ENCODE measurements at regions of chr20 and their contacts with region 1.

Region 1: GRCh38 chr20:1466211-1467081 is at the start of gene NSFL1C:
- DNase-seq: peak; percentile 94 to 99 (median 98)
- ATAC-seq: peak; percentile 96
- H3K4me3 ChIP-seq: peak within 1 kb of the TSS; percentile 73
- H3K4me3 Mint-ChIP-seq: peak within 1 kb of the TSS; percentile 88
- H3K27ac ChIP-seq: peak within 1 kb of the TSS; percentile 41 to 84
- H3K27ac Mint-ChIP-seq: peak within 1 kb of the TSS; percentile 68
- H3K4me1 ChIP-seq: peaks cover 34% of the 10 kb centered on the region
- H3K4me1 Mint-ChIP-seq: peaks cover 49% of the 10 kb centered on the region
- H3K27me3 ChIP-seq: peaks cover 0 to 2% of the 10 kb centered on the region in 2 experiments
- H3K27me3 Mint-ChIP-seq: peaks cover 10% of the 10 kb centered on the region
- CTCF ChIP-seq: peak; percentile 100
- total RNA-seq, gene NSFL1C: 53.2 to 53.4 TPM

Region 2: DNA sequence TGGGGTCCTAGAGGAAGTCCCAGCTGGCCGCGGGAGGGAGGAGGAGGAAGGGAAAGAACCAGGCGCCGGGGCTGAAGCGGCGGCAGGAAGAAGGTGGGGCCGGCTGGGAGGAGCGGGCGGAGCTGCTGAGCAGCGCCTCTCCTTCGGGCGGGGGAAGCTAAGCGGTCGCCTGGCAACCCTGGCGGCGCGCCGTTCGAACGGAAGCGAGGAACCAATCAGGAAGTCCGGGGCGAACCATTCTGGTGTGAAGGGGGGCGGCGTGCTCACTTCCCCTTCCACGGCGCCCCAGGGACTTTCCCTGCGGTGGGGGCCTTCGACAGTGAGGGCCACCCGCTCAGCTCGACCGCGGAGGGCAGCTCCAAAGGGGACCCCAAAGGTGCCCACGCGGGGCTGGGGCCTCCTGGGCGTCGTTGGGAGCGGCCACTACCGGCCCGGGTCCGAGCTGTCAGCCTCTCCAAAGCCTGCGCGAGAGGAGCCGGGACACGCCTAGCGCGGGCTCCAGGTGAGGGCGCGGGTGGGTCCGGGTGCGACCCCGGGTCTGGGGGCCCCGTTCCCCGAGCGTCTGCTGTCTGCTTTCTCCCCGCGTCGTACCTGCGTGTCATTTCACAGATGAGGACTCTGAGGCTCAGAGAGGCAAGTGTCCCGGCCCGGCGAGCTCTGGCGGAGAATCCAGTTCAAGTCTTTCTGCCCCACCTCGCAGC is 632.8 kb before region 1 on chr20 and contains the start of gene FAM110A:
- CTCF ChIA-PET with region 1: no interaction called
- POLR2A ChIA-PET with region 1: no interaction called
- intact Hi-C with region 1: loop called in 1 of 2 experiments (anchors 10 kb)
- DNase-seq: peak; percentile 91 to 98 (median 94)
- ATAC-seq: peak; percentile 93
- H3K4me3 ChIP-seq: peak within 1 kb of the TSS; percentile 74
- H3K4me3 Mint-ChIP-seq: peak within 1 kb of the TSS; percentile 92
- H3K27ac ChIP-seq: peak within 1 kb of the TSS; percentile 83 to 93
- H3K27ac Mint-ChIP-seq: peak within 1 kb of the TSS; percentile 87
- H3K4me1 ChIP-seq: peaks cover 40% of the 10 kb centered on the region
- H3K4me1 Mint-ChIP-seq: peaks cover 50% of the 10 kb centered on the region
- H3K27me3 ChIP-seq: no peaks in the 10 kb centered on the region
- H3K27me3 Mint-ChIP-seq: no peaks in the 10 kb centered on the region
- CTCF ChIP-seq: no peak
- total RNA-seq, gene FAM110A: 4.5 to 4.8 TPM

Region 3: GRCh38 chr20:1325173-1326030 is 141.0 kb before region 1 on chr20:
- CTCF ChIA-PET with region 1: interaction called, 5 read pairs
- POLR2A ChIA-PET with region 1: interaction called, 8 read pairs
- intact Hi-C with region 1: loop called (anchors 1 to 2 kb)
- DNase-seq: peak; percentile 98 to 100 (median 99)
- ATAC-seq: peak; percentile 84
- H3K4me3 ChIP-seq: peak overlapping the region; percentile 95
- H3K4me3 Mint-ChIP-seq: no peak overlapping the region
- H3K27ac ChIP-seq: peak overlapping the region; percentile 95 to 98
- H3K27ac Mint-ChIP-seq: no peak overlapping the region
- H3K4me1 ChIP-seq: peaks cover 55% of the 10 kb centered on the region
- H3K4me1 Mint-ChIP-seq: peaks cover 13% of the 10 kb centered on the region
- H3K27me3 ChIP-seq: no peaks in the 10 kb centered on the region
- H3K27me3 Mint-ChIP-seq: no peaks in the 10 kb centered on the region
- CTCF ChIP-seq: peak; percentile 13

Region 4: DNA sequence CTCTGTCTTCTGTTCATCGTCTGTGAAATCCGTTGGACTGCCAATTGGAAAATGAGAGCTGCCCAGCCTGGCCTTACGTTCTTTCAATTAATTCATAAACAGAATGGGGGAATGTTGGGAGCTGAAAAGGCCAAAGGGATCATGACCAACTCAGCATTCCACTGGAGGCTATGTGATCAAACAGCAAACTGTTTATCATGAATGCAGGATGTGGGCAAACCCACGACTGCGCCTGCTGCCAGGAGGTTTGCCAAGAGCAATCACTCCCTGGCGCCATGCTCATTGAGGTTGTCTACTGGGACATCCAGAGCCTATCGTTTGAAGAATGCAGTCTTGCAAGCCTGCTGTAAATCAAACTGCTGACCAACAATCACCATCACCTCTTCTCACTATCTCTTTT is 64.3 kb before region 1 on chr20:
- CTCF ChIA-PET with region 1: no interaction called
- POLR2A ChIA-PET with region 1: no interaction called
- intact Hi-C with region 1: no loop called
- DNase-seq: peak in 1 of 14 experiments; percentile 41
- ATAC-seq: no peak
- H3K4me3 ChIP-seq: no peak overlapping the region
- H3K4me3 Mint-ChIP-seq: no peak overlapping the region
- H3K27ac ChIP-seq: no peak overlapping the region
- H3K27ac Mint-ChIP-seq: no peak overlapping the region
- H3K4me1 ChIP-seq: peaks cover 11% of the 10 kb centered on the region
- H3K4me1 Mint-ChIP-seq: peaks cover 11% of the 10 kb centered on the region
- H3K27me3 ChIP-seq: no peaks in the 10 kb centered on the region
- H3K27me3 Mint-ChIP-seq: no peaks in the 10 kb centered on the region
- CTCF ChIP-seq: no peak

Region 5: DNA sequence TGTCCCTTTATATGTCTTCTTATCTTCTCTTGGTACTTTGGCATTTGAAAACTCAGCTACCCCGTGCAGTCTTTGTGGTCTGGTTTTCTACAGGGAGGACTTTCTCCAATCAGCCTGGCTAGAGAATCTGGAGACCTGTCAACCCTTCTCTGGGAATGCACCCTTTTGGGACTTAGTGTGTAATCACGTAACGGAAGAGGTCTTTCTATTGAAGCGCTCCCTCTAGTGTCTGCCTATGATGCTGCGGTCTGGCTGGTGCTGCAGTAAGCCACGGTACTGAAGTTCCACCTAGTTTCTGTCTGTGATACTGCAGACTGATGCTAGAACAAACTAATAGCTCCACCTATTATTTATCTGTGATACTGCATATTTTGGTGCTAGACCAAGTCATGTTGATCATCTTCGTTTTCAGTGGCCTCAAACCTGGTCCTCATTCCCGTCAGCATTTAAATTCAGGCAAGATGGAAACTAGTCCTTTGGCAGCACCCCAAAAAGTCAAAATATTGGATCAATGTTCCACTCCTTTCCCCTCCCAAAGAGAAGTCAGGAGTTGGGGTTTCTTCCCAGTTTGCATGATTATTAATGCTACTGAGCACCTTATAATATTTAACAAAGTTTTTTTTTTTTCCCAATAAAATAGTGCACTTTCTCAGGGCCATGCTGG is 37.2 kb after region 1 on chr20:
- CTCF ChIA-PET with region 1: interaction called, 16 read pairs
- POLR2A ChIA-PET with region 1: no interaction called
- intact Hi-C with region 1: loop called in 1 of 2 experiments (anchors 2 kb)
- DNase-seq: peak; percentile 54 to 93 (median 69)
- ATAC-seq: peak; percentile 100
- H3K4me3 ChIP-seq: no peak overlapping the region
- H3K4me3 Mint-ChIP-seq: no peak overlapping the region
- H3K27ac ChIP-seq: no peak overlapping the region
- H3K27ac Mint-ChIP-seq: no peak overlapping the region
- H3K4me1 ChIP-seq: no peaks in the 10 kb centered on the region
- H3K4me1 Mint-ChIP-seq: peaks cover 5% of the 10 kb centered on the region
- H3K27me3 ChIP-seq: peaks cover 3 to 22% of the 10 kb centered on the region in 2 experiments
- H3K27me3 Mint-ChIP-seq: peaks cover 23% of the 10 kb centered on the region
- CTCF ChIP-seq: peak; percentile 98

Region 6: GRCh38 chr20:2470423-2471193 is 1004.2 kb after region 1 on chr20 and contains the start of gene SNRPB:
- CTCF ChIA-PET with region 1: no interaction called
- POLR2A ChIA-PET with region 1: interaction called, 5 read pairs
- intact Hi-C with region 1: loop called in 1 of 2 experiments (anchors 5 kb)
- DNase-seq: peak; percentile 94 to 99 (median 95)
- ATAC-seq: peak; percentile 93
- H3K4me3 ChIP-seq: peak within 1 kb of the TSS; percentile 90
- H3K4me3 Mint-ChIP-seq: peak within 1 kb of the TSS; percentile 98
- H3K27ac ChIP-seq: peak within 1 kb of the TSS; percentile 91 to 96
- H3K27ac Mint-ChIP-seq: peak within 1 kb of the TSS; percentile 98
- H3K4me1 ChIP-seq: peaks cover 23% of the 10 kb centered on the region
- H3K4me1 Mint-ChIP-seq: peaks cover 54% of the 10 kb centered on the region
- H3K27me3 ChIP-seq: no peaks in the 10 kb centered on the region
- H3K27me3 Mint-ChIP-seq: no peaks in the 10 kb centered on the region
- CTCF ChIP-seq: no peak
- total RNA-seq, gene SNRPB: 146 to 147 TPM